ENCODE measurements at regions of chr11 and their contacts with region 1.

Region 1: GRCh38 chr11:65859200-65859811 is 927 bp upstream of the MUS81 start:
- DNase-seq: peak; percentile 99
- H3K4me3 Mint-ChIP-seq: peak overlapping the region; percentile 92
- H3K27ac Mint-ChIP-seq: peak overlapping the region; percentile 94
- H3K4me1 Mint-ChIP-seq: peaks cover 43% of the 10 kb centered on the region
- H3K27me3 Mint-ChIP-seq: no peaks in the 10 kb centered on the region

Region 2: GRCh38 chr11:65615229-65615941 is 243.9 kb before region 1 on chr11 and contains the start of gene PCNX3:
- intact Hi-C with region 1: loop called (anchors 1 kb)
- DNase-seq: peak; percentile 100
- H3K4me3 Mint-ChIP-seq: peak within 1 kb of the TSS; percentile 97
- H3K27ac Mint-ChIP-seq: peak within 1 kb of the TSS; percentile 93
- H3K4me1 Mint-ChIP-seq: peaks cover 34% of the 10 kb centered on the region
- H3K27me3 Mint-ChIP-seq: peaks cover 3% of the 10 kb centered on the region
- total RNA-seq, gene PCNX3: 52.0 and 55.1 TPM in 2 replicates

Region 3: GRCh38 chr11:65711785-65712632 is 147.3 kb before region 1 on chr11 and contains the start of gene KAT5:
- intact Hi-C with region 1: loop called (anchors 1 kb)
- DNase-seq: peak; percentile 99
- H3K4me3 Mint-ChIP-seq: peak within 1 kb of the TSS; percentile 93
- H3K27ac Mint-ChIP-seq: peak within 1 kb of the TSS; percentile 99
- H3K4me1 Mint-ChIP-seq: peaks cover 22% of the 10 kb centered on the region
- H3K27me3 Mint-ChIP-seq: no peaks in the 10 kb centered on the region
- total RNA-seq, gene KAT5: 71.6 and 72.3 TPM in 2 replicates

Region 4: GRCh38 chr11:65873318-65874156 is 14.2 kb after region 1 on chr11:
- intact Hi-C with region 1: loop called (anchors 1 kb)
- DNase-seq: peak; percentile 100
- H3K4me3 Mint-ChIP-seq: peak overlapping the region; percentile 80
- H3K27ac Mint-ChIP-seq: peak overlapping the region; percentile 22
- H3K4me1 Mint-ChIP-seq: peaks cover 19% of the 10 kb centered on the region
- H3K27me3 Mint-ChIP-seq: no peaks in the 10 kb centered on the region

Region 5: DNA sequence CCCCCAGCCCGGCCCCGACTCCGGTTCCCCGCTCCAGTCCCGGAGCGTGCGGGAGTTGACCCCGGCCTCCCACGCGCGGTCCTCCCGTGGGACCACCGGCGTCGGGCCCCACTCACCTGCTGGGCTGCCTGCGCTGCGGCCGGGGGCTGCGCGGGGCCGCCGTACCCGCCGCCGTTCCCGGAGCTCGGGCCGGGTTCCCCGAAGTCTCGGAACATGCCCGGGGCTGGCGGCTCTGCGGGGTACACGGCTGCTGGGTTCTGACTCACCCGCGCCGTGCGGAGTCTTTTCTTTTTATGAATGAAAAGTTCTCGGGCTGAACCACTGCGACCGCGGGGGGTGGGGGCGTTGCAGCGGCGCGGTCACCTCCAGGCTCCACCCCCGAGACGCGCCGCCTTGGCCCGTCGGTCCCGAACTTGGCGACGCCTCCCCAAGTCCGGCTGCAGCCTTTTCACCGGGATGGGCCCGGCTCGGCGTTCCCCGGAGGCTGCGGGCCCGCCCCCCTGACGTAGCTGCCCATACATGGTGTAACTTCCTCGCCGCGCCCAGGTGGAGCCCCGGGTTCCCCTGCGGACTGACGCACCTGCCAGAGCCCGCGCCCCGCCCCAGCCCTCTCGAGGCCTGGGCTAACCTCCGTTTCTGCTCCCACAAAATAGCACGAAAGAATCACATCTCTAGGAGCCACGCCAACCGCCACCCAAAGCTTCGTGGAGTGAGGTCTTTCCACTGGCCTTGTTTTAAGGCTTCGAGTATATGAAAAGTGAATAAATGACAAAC is 41.0 kb after region 1 on chr11 and contains the start of gene FOSL1:
- intact Hi-C with region 1: loop called (anchors 1 kb)
- DNase-seq: peak; percentile 97
- H3K4me3 Mint-ChIP-seq: peak within 1 kb of the TSS; percentile 82
- H3K27ac Mint-ChIP-seq: peak within 1 kb of the TSS; percentile 78
- H3K4me1 Mint-ChIP-seq: peaks cover 37% of the 10 kb centered on the region
- H3K27me3 Mint-ChIP-seq: peaks cover 10% of the 10 kb centered on the region
- total RNA-seq, gene FOSL1: 32.1 and 32.9 TPM in 2 replicates

Region 6: DNA sequence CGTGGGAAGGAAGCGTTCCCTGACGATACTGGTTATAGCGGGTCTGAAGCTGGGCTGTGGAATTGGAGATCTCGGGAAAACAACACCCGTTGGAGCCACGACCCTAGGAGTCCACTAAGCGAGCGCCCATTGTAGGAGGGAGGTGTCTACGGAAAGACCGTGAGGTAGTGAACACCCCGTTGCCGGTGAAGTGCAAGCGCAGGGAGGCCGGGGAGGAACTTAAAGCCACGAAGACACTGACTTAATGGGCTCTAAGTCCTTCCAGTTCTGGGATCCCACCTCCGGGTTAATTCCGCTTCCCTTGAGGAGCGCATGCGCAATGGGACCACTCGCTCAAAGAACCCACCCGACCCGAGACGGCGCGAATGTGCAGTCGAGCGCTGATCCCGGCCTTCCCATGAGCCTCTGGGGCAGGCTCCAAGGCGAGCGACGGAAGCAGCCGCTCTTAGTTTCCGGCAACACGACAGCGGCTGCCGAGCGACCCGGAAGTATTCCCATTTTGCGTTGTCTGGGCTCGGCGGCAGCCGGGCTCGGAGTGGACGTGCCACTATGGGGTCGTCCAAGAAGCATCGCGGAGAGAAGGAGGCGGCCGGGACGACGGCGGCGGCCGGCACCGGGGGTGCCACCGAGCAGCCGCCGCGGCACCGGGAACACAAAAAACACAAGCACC is 102.1 kb after region 1 on chr11 and contains the start of gene SART1:
- intact Hi-C with region 1: loop called (anchors 1 kb)
- DNase-seq: peak; percentile 99
- H3K4me3 Mint-ChIP-seq: peak within 1 kb of the TSS; percentile 90
- H3K27ac Mint-ChIP-seq: peak within 1 kb of the TSS; percentile 95
- H3K4me1 Mint-ChIP-seq: peaks cover 42% of the 10 kb centered on the region
- H3K27me3 Mint-ChIP-seq: peaks cover 1% of the 10 kb centered on the region
- total RNA-seq, gene SART1: 99.1 and 104 TPM in 2 replicates

Region 7: DNA sequence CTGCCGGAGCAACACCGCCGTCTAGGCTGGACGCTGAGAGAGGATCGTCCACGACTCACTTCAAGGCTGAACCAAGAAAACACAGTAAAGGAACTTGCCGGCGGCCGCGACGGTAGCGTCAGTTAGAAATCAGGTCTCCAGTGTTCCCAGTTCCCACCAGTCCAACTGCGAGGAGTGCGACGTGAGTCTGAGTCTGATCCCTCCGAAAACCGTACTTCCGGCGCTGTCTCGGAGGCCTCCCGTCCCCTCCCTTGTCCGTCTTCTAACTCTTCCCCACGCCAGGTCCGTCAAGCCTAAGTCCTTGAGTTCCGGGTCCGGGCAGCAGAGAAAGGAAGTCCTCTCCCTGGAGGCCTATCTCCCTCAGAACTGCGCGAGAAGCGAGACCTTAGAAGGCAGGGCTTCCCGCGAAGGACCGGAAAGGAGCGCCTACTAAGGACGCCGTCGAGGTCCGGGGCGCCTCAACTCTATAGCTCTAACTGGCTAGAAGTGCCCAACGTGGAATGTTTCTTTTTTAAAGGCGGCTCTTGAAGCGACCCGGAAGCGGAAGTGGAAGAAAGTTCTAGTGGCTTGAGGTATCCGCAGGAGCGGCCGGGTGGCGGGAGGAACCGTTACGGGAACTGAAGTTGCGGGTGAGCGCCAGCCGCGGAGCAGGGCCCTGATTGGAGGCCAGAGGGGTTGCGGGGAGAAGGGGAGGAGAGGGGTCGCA is 142.8 kb after region 1 on chr11 and contains the starts of genes BANF1 and EIF1AD:
- intact Hi-C with region 1: loop called (anchors 1 kb)
- DNase-seq: peak; percentile 98
- H3K4me3 Mint-ChIP-seq: peak within 1 kb of the TSS; percentile 100
- H3K27ac Mint-ChIP-seq: peak within 1 kb of the TSS; percentile 99
- H3K4me1 Mint-ChIP-seq: peaks cover 28% of the 10 kb centered on the region
- H3K27me3 Mint-ChIP-seq: no peaks in the 10 kb centered on the region
- total RNA-seq, gene BANF1: 291 and 298 TPM in 2 replicates
- total RNA-seq, gene EIF1AD: 64.9 and 75.9 TPM in 2 replicates

Measured in activated CD4-positive, alpha-beta T cell treated with anti-CD3 and anti-CD28 coated beads, Interleukin-2, amount 10 ng/mL, durations not matched to agents 24 days and 14 days (primary cell).